ENCODE measurements at regions of chr9 and their contacts with region 1.

Region 1: DNA sequence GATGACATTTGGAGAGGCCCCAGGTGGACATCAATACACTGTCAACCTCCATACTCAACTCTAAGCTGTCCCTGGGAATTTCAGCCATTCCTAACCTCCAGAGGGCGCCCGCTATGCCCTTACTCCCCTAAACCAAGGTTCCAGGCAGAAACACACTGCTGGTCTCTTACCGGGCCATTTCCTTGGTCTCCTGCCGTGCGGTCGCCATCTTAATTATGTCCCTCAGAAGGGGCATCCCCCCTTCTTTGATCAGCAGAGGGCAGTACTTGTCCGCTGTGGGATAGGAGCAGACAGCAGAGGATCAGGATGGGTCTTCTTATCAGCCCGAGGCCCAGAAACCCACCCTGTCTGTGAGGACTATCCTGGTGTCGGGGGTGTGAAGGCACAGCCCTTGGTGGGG is 9.3 kb upstream of the ZDHHC12 start:
- DNase-seq: peak; percentile 93
- H3K4me3 Mint-ChIP-seq: no peak overlapping the region
- H3K27ac Mint-ChIP-seq: no peak overlapping the region
- H3K4me1 Mint-ChIP-seq: no peaks in the 10 kb centered on the region
- H3K27me3 Mint-ChIP-seq: no peaks in the 10 kb centered on the region
- CTCF ChIP-seq: peak; percentile 59

Region 2: GRCh38 chr9:128249908-128250838 is 483.1 kb before region 1 on chr9:
- CTCF ChIA-PET with region 1: no interaction called
- POLR2A ChIA-PET with region 1: no interaction called
- intact Hi-C with region 1: no loop called
- DNase-seq: peak; percentile 90
- H3K4me3 Mint-ChIP-seq: peak overlapping the region; percentile 73
- H3K27ac Mint-ChIP-seq: no peak overlapping the region
- H3K4me1 Mint-ChIP-seq: peaks cover 17% of the 10 kb centered on the region
- H3K27me3 Mint-ChIP-seq: no peaks in the 10 kb centered on the region
- CTCF ChIP-seq: no peak

Region 3: GRCh38 chr9:128322404-128323211 is 410.6 kb before region 1 on chr9 and contains the starts of genes COQ4 and TRUB2:
- CTCF ChIA-PET with region 1: no interaction called
- POLR2A ChIA-PET with region 1: no interaction called
- intact Hi-C with region 1: no loop called
- DNase-seq: peak; percentile 95
- H3K4me3 Mint-ChIP-seq: peak within 1 kb of the TSS; percentile 86
- H3K27ac Mint-ChIP-seq: peak within 1 kb of the TSS; percentile 95
- H3K4me1 Mint-ChIP-seq: peaks cover 8% of the 10 kb centered on the region
- H3K27me3 Mint-ChIP-seq: no peaks in the 10 kb centered on the region
- CTCF ChIP-seq: no peak
- total RNA-seq, gene COQ4: 57.1 and 58.9 TPM in 2 replicates
- total RNA-seq, gene TRUB2: 36.1 and 37.6 TPM in 2 replicates

Region 4: DNA sequence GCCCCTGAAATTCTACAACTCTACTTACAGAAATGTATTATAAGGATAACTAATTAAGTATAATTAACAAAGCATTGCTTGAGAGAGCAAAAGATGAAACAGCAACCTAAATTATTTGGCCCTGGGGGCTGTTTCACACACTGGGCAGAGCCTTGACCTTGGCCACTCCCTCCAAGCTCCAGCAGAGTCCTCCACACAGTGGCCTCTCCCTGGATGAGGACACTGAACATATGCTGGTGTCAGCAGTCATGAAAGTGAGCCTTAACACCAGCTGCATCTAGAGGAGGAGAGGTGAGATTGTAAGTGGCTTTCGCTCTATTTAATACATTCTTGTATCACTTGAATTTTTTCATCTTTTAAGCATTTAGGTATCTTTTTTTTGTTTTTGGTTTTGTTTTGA is 14.0 kb after region 1 on chr9:
- CTCF ChIA-PET with region 1: interaction called, 12 read pairs
- POLR2A ChIA-PET with region 1: interaction called, 3 read pairs
- intact Hi-C with region 1: no loop called
- DNase-seq: no peak
- H3K4me3 Mint-ChIP-seq: no peak overlapping the region
- H3K27ac Mint-ChIP-seq: no peak overlapping the region
- H3K4me1 Mint-ChIP-seq: no peaks in the 10 kb centered on the region
- H3K27me3 Mint-ChIP-seq: no peaks in the 10 kb centered on the region
- CTCF ChIP-seq: no peak